Common myeloid progenitor, CD34-positive (primary cell): ENCODE measurements at regions of chr10 and their contacts with region 1.

Region 1: GRCh38 chr10:48456361-48456804 is 148.5 kb downstream of the ARHGAP22 start:
- DNase-seq: peak; percentile 70 to 91 (median 89)
- H3K4me3 ChIP-seq: peak overlapping the region in 4 of 7 experiments; percentile 23 to 49 (median 32)
- H3K27ac ChIP-seq: peak overlapping the region in 1 of 2 experiments; percentile 70
- H3K4me1 ChIP-seq: peaks cover 0 to 85% (median 63%) of the 10 kb centered on the region in 4 experiments
- H3K27me3 ChIP-seq: no peaks in the 10 kb centered on the region

Region 2: GRCh38 chr10:48470115-48470892 is 13.9 kb after region 1 on chr10:
- CTCF ChIA-PET with region 1: interaction called, 155 read pairs
- POLR2A ChIA-PET with region 1: interaction called, 10 read pairs
- DNase-seq: peak; percentile 90 to 99 (median 98)
- H3K4me3 ChIP-seq: peak overlapping the region in 4 of 7 experiments; percentile 11 to 43 (median 19)
- H3K27ac ChIP-seq: peak overlapping the region; percentile 86 to 93
- H3K4me1 ChIP-seq: peaks cover 10 to 87% (median 81%) of the 10 kb centered on the region in 4 experiments
- H3K27me3 ChIP-seq: no peaks in the 10 kb centered on the region

Region 3: DNA sequence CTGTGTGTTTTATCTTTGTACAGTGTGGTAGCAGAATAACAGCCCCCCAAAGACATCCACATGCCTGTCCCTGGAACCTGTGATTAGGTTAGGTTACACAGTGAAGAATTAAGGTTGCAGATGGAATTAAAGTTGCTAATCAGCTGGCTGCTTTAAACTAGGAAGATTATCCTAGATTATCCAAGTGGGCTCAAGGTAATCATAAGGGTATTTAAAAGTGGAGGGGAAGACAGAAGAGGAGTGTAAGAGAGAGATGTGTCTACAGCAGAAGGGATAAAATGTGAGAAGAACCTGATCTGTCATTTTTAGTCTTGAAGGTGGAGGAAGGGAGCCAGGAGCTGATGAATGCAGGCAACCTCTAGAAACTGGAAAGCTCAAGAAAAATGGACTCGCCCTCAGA is 30.9 kb after region 1 on chr10:
- CTCF ChIA-PET with region 1: interaction called, 12 read pairs
- POLR2A ChIA-PET with region 1: interaction called, 4 read pairs
- DNase-seq: no peak
- H3K4me3 ChIP-seq: no peak overlapping the region
- H3K27ac ChIP-seq: no peak overlapping the region
- H3K4me1 ChIP-seq: peaks cover 14 to 64% (median 31%) of the 10 kb centered on the region in 4 experiments
- H3K27me3 ChIP-seq: no peaks in the 10 kb centered on the region

Region 4: DNA sequence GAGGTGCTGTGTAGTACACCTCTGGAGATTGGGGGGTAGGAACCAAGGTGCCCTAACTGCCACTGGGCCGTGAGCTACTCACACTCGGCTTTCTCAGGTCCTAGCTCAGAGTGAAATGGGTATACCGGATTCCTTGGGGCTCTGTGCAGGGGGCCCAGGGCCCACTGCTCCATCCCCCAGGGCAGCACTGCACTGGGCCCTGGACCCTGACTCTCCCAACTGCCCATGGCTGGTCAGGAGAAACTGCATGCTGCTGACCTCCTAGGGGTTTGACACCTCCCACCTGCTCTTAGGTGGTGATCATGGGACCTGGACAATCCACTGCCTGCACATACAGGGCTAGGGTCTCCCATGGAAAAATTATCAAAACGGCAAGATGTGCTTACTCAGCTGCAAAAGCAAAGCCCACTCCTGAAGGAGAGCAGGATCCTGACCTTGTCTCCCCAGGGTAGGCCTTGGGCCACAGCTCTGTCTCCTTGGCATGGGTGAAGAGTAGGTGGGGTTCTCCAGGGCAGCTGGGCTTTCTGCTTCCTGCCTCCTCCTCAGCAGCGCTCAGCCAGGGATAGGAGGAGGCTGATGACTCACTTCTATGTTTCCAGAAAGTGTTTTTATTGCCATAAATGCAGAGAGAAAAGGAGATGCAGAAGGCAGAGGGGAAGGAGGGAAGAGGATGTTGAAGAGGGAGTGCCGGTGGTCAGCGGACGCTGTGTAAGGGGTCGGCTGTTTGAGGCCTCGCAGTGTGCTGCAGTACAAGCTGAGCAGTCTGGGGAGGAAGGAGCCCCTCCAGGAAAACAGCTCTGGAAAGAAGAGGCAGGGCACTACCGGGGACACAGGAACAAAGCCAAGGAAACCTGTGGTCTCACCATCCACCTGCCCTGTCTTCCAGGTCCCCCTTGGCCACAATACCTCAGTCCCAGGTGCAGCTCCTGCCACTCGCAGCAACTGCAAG is 40.7 kb after region 1 on chr10:
- CTCF ChIA-PET with region 1: interaction called, 220 read pairs
- POLR2A ChIA-PET with region 1: no interaction called
- DNase-seq: peak in 2 of 3 donors; percentile 61 to 73
- H3K4me3 ChIP-seq: peak overlapping the region in 3 of 7 experiments; percentile 20 to 49 (median 24)
- H3K27ac ChIP-seq: peak overlapping the region in 1 of 2 experiments; percentile 59
- H3K4me1 ChIP-seq: peaks cover 4 to 87% (median 85%) of the 10 kb centered on the region in 4 experiments
- H3K27me3 ChIP-seq: no peaks in the 10 kb centered on the region